Uterus (tissue), 4 donors: ENCODE measurements at regions of chr9 and their contacts with region 1.

Region 1: DNA sequence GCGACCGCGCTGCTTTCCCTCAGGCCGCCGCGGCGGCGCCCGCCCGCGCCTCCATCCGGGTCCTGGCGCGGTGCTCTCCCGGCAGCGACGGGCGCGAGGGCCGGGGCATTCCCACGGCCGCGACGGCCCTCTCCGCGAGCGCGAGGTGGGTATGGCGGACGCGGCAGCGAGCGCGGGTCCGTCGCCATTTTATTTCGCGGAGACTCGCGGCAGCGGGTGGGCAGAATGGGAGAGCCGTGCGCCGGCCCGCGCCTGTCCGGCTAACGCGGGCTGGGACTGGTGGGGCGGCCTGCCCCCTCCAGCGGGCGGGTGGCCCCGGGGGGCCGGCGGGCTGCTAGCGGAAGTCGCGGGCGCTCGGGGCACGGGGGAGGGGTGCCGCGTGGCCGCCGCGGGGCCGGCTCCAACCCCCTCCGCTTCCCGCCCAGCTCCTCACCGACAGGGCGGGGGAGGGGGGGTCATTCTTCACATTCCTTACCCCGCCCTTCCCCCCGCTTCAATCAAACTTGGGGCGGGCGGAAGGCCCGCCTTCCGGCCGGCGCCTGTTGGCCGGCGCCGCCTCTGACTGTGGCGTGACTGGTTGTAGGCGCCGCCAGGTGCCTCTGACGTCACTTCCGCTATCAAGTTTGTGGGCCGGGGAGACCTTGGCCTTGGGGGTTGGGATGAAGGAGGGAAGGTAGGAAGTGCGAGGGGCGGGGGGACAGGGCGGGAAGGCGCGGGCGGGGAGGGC is 82.1 kb downstream of the PTPDC1 start:
- DNase-seq: peak; percentile 98 to 99
- H3K4me3 ChIP-seq: peak overlapping the region; percentile 79 to 97
- H3K27ac ChIP-seq: peak overlapping the region; percentile 100
- H3K4me1 ChIP-seq: no peaks in the 10 kb centered on the region
- H3K27me3 ChIP-seq: no peaks in the 10 kb centered on the region
- CTCF ChIP-seq: peak in 2 of 4 experiments; percentile 41 to 62
- POLR2A ChIP-seq: peak; percentile 97 to 100

Region 2: DNA sequence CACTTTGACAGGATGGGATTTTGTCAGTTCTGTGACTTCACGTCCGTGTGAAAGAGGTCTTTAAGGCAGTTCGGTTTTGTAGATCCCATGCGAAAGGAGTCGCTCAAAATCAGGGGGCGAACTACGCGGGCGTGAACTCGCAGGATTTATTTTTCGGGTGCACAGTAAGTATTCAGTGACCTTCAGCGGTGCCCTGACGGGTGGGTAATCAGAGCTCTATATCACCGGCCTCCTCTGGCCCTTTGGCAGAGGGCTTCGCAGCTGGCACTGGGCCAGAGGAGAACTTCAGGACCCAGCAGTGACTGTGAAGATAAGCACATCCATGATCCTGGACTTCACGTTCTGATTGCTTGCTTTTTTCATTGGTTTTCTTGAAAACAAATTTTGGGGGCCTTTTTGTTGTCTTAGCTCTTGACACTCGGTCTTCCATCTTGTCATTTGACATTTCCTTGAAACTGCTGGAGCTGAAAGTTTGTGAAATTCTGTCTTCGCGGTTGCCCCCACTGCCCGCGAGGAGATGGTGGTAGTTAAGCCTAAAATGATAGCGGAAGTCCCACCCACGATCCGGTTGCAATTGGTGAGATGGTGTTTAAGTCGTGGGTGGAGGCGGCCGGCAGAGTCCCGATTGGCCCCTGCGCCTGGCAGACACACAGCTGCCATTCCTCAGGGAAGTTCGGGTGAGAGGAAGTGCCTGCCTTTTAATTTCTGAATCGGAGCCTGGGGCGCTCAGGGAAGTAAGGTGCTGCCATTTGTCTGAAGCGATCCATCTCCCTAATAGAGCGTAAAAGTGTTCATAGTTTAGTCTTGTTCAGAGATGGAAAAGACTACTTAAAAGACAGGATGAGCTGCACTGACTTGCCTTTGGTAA is 713.1 kb before region 1 on chr9 and contains the start of gene FAM120AOS:
- intact Hi-C with region 1: loop called (anchors 10 kb)
- DNase-seq: peak; percentile 87 to 92
- H3K4me3 ChIP-seq: peak within 1 kb of the TSS; percentile 69 to 81
- H3K27ac ChIP-seq: peak within 1 kb of the TSS; percentile 93 to 98
- H3K4me1 ChIP-seq: peaks cover 0 to 27% of the 10 kb centered on the region in 2 donors
- H3K27me3 ChIP-seq: no peaks in the 10 kb centered on the region
- CTCF ChIP-seq: no peak
- POLR2A ChIP-seq: peak; percentile 47 to 51
- total RNA-seq, gene FAM120AOS: 8.5 to 45.2 (median 39.1) TPM